Spleen (tissue), 13 donors: ENCODE measurements at regions of chr7 and their contacts with region 1.

Region 1: DNA sequence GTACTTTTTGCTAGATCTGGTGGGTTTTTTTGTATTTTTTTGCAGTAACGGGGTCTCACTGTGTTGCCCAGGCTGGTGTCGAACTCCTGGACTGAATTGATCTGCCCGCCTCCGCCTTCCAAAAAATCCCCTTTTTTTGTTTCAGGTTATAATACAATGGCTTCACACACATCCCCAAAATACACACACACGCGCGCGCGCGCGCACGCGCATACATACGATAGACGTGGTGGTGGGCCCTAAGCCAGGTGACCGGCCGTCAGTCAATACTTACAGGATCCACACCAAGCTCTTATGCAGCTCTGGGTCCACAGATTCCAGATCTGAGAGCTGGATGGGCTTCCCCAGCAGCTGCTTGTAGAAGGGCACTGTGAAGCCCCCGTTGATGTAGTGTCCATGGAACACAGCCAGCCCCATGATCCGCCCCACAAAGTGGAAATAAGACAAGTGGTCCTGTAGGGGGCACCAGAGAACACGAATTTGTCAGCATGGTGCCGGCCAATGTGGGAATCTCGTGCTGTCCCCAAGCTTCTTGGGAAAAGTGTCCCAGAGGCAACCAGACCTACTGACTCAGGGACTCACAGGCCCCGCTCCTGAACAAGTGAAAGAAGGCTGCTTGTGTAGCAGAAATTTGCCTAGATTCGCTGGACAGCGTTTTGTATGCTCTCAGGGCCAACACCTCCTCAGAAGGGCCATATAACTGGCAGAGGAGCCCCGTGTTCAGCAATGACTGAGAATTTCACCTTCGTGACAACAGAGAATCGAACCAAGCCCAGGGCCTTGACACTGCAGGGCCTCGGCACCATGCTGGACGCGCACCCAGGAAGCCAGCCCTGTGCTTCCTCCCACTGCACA is 103.6 kb downstream of the SMURF1 start:
- DNase-seq: peak; percentile 81
- H3K4me3 ChIP-seq: no peak overlapping the region
- H3K27ac ChIP-seq: peak overlapping the region in 5 of 8 donors; percentile 17 to 64 (median 57)
- H3K4me1 ChIP-seq: peaks cover 0 to 18% (median 7%) of the 10 kb centered on the region in 6 donors
- H3K27me3 ChIP-seq: no peaks in the 10 kb centered on the region
- CTCF ChIP-seq: peak; percentile 58 to 82 (median 70)
- POLR2A ChIP-seq: no peak

Region 2: GRCh38 chr7:99143853-99144672 is 103.7 kb after region 1 on chr7 and contains the start of gene SMURF1:
- intact Hi-C with region 1: loop called (anchors 10 kb)
- DNase-seq: peak; percentile 95
- H3K4me3 ChIP-seq: peak within 1 kb of the TSS; percentile 78 to 98 (median 92)
- H3K27ac ChIP-seq: peak within 1 kb of the TSS; percentile 89 to 99 (median 98)
- H3K4me1 ChIP-seq: peaks cover 14 to 53% (median 37%) of the 10 kb centered on the region in 6 donors
- H3K27me3 ChIP-seq: no peaks in the 10 kb centered on the region
- CTCF ChIP-seq: no peak
- POLR2A ChIP-seq: peak in 1 of 3 donors; percentile 33
- total RNA-seq, gene SMURF1: 19.1 to 29.0 (median 25.3) TPM

Region 3: GRCh38 chr7:99311702-99312101 is 271.4 kb after region 1 on chr7:
- intact Hi-C with region 1: loop called (anchors 2 kb)
- DNase-seq: no peak
- H3K4me3 ChIP-seq: no peak overlapping the region
- H3K27ac ChIP-seq: no peak overlapping the region
- H3K4me1 ChIP-seq: peaks cover 0 to 12% (median 5%) of the 10 kb centered on the region in 6 donors
- H3K27me3 ChIP-seq: peaks cover 0 to 7% (median 0%) of the 10 kb centered on the region in 7 donors
- CTCF ChIP-seq: no peak
- POLR2A ChIP-seq: no peak